A673 (cell line): ENCODE measurements at regions of chr12 and their contacts with region 1.

Region 1: GRCh38 chr12:32918890-32919801 is 22.6 kb upstream of the PKP2 start:
- DNase-seq: peak; percentile 54
- H3K4me3 ChIP-seq: no peak overlapping the region
- H3K27ac ChIP-seq: no peak overlapping the region
- H3K4me1 ChIP-seq: no peaks in the 10 kb centered on the region
- H3K27me3 ChIP-seq: no peaks in the 10 kb centered on the region
- CTCF ChIP-seq: peak; percentile 66

Region 2: DNA sequence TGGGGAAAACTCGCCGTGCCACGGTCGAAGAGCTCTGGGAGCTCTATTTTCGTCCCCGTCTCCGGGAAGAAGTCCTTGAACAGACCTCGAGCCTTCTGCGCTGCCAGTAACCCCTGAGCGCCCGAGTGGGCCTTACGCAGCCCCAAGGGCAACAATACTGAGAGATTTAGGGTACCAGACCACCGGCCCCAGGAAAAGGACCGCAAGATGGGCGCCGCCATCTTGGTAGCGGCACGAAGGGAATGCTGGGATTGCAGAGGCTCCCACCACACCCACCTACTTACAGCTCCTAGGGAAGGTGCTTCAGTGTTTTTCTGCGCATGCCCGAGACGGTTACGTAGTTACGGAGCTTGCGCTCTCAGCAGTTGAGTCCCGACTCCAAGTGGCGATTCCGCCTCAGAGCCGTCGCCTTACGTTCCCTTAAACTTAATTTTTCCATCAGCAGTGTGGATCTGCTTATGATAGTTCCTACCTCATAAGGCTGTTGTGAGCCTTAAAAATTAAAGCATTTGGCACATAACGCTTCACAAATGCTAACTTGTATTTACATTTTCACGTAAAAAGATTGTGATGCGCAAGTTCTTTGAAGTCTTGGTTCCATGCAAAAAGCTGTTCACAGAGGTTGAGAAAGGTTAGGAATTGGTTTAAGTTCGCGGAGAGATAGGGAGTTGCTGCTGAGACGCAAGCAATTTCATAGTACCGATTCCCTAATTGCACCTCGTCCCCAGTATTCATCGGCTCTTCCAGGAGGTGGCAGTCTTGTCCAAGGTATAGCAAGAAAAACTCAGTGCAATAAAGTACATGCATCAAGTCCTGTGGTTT is 163.3 kb before region 1 on chr12 and contains the start of gene YARS2:
- CTCF ChIA-PET with region 1: interaction called, 10 read pairs
- POLR2A ChIA-PET with region 1: no interaction called
- intact Hi-C with region 1: loop called (anchors 1 kb)
- DNase-seq: peak; percentile 99
- H3K4me3 ChIP-seq: peak within 1 kb of the TSS; percentile 65
- H3K27ac ChIP-seq: peak within 1 kb of the TSS; percentile 87
- H3K4me1 ChIP-seq: no peaks in the 10 kb centered on the region
- H3K27me3 ChIP-seq: no peaks in the 10 kb centered on the region
- CTCF ChIP-seq: peak; percentile 88
- total RNA-seq, gene YARS2: 29.1 and 29.4 TPM in 2 replicates

Region 3: DNA sequence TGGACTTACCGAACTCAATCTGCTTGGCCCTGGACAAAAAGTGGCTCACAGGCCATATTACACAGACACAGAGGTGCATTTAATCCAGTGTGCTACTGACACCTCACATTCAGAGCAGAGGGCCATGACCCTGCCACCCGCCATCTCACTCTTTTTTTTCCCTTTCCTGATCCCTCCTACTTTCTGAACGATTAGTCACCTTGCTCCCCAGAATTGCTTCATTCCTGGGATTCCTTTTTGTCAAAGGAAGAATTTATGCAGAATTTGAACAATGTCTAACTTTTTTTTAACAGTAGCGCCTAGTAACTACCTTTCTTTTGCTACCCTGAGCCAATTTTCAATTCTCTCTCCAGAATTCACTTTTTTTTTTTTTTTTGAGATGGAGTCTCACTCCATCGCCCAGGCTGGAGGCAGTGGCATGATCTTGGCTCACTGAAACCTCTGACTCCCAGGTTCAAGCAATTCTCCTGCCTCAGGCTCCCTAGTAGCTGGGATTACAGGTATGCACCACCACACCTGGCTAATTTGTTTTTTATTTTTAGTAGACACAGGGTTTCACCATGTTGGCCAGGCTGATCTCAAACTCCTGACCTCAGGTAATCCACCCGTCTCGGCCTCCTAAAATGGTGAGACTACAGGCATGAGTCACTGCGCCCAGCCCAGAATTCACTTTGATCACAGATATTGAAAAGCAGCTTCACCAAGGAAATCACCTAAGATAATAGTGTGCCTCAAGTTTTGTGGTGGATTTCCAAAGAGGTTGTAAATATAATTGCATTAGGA is 27.0 kb before region 1 on chr12:
- CTCF ChIA-PET with region 1: no interaction called
- POLR2A ChIA-PET with region 1: no interaction called
- intact Hi-C with region 1: no loop called
- DNase-seq: no peak
- H3K4me3 ChIP-seq: no peak overlapping the region
- H3K27ac ChIP-seq: no peak overlapping the region
- H3K4me1 ChIP-seq: no peaks in the 10 kb centered on the region
- H3K27me3 ChIP-seq: peaks cover 15% of the 10 kb centered on the region
- CTCF ChIP-seq: no peak

Region 4: DNA sequence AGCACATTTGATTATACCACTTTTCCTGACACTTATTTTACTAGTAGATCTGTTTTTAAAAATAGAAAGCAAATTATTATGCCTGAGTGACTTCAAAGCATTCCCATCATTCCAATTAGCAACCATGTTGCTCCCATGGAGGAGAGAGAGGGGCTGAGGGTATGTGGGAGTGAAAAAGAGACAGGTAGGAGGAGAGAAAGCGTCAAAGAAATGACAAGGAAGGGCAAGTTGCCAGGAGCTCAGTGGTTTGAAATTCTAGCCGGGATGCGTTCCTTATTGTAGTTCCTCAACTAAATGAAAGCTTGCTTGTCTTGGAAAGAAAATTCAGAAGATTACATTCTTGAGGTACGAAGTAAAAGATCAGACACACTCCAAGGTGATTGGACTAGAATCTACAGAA is 69.8 kb after region 1 on chr12:
- CTCF ChIA-PET with region 1: no interaction called
- POLR2A ChIA-PET with region 1: no interaction called
- intact Hi-C with region 1: no loop called
- DNase-seq: no peak
- H3K4me3 ChIP-seq: no peak overlapping the region
- H3K27ac ChIP-seq: no peak overlapping the region
- H3K4me1 ChIP-seq: no peaks in the 10 kb centered on the region
- H3K27me3 ChIP-seq: peaks cover 7% of the 10 kb centered on the region
- CTCF ChIP-seq: no peak